ENCODE measurements at regions of chr15 and their contacts with region 1.

Region 1: DNA sequence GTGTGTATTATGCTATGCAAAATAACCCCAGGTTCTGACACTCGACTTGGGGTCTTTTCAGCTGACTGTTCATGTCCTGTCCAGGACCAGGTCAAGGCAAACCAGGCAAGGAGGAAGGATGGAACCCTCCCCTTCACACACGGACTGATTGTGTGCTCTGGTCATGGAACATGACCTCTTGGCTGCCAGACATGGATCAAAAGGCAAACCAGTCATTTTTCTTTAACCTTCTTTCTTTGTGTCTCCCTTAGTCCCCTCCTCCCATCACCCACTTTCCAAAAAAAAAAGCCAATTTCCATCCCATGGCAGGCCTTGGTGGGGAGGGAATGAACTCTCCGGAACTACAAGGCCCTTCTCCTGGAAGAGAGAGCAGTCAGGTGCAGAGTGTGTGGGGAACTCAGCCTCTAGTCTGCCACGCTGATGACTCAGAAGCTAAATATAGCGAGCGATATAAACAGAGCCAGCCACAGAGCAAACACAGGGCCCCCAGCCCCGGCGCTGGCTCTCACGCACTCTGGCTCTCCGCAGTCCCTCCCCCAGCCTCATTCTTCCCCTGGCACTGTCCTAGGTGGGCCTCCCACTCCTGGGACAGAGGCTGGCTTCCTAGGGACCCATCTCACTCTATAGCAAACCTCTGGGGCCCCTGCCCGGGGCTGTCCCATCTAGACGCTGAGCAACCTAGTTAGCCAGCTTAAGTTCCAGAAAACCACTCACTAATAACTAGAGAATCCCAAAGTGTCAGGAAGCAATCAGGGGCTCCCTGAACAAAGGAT is 10.0 kb downstream of the BMF start:
- DNase-seq: peak; percentile 86
- H3K4me3 Mint-ChIP-seq: peak overlapping the region; percentile 54
- H3K27ac Mint-ChIP-seq: peak overlapping the region; percentile 98
- H3K4me1 Mint-ChIP-seq: peaks cover 90% of the 10 kb centered on the region
- H3K27me3 Mint-ChIP-seq: no peaks in the 10 kb centered on the region

Region 2: GRCh38 chr15:40044717-40045571 is 53.7 kb before region 1 on chr15:
- CTCF ChIA-PET with region 1: interaction called, 255 read pairs
- DNase-seq: peak; percentile 89
- H3K4me3 Mint-ChIP-seq: peak overlapping the region; percentile 19
- H3K27ac Mint-ChIP-seq: peak overlapping the region; percentile 74
- H3K4me1 Mint-ChIP-seq: peaks cover 84% of the 10 kb centered on the region
- H3K27me3 Mint-ChIP-seq: no peaks in the 10 kb centered on the region

Region 3: GRCh38 chr15:40054605-40055545 is 43.8 kb before region 1 on chr15:
- CTCF ChIA-PET with region 1: interaction called, 255 read pairs
- DNase-seq: peak; percentile 75
- H3K4me3 Mint-ChIP-seq: peak overlapping the region; percentile 57
- H3K27ac Mint-ChIP-seq: peak overlapping the region; percentile 93
- H3K4me1 Mint-ChIP-seq: peaks cover 82% of the 10 kb centered on the region
- H3K27me3 Mint-ChIP-seq: peaks cover 8% of the 10 kb centered on the region

Region 4: DNA sequence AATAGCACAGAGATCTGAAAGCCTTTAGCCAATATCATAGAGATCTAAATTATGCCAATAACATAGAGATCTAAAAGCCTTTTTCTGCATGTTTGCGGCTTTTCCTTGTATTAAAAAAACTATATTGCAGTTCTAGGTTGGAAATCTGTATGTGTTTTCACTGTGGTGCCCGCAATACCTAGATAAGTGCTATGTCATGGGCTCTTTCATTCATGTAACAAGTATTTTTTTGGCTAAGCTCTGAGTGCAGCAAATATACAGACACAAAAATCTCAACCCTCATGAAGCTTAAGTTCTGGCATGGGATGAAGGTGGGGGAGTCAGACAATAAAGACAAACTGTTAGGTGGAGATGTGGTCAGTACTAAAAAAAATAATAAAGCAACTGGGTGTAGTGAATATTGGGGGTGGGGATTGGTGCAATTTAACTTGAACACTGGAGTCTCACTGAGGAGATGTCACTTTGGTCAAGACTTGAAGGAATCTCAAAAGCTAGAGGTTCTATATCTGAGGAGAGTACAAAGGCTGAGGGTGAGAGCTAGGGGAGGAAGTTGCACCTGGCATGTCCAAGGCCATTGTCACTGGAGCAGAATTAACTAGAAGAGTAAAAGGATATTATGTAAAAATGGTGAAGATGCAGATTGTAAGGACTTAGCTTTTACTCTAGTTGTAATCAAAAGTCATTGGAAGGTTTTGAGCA is 63.2 kb after region 1 on chr15:
- CTCF ChIA-PET with region 1: no interaction called
- DNase-seq: no peak
- H3K4me3 Mint-ChIP-seq: no peak overlapping the region
- H3K27ac Mint-ChIP-seq: no peak overlapping the region
- H3K4me1 Mint-ChIP-seq: peaks cover 14% of the 10 kb centered on the region
- H3K27me3 Mint-ChIP-seq: peaks cover 7% of the 10 kb centered on the region

Region 5: GRCh38 chr15:40280260-40281056 is 181.8 kb after region 1 on chr15:
- CTCF ChIA-PET with region 1: no interaction called
- DNase-seq: no peak
- H3K4me3 Mint-ChIP-seq: no peak overlapping the region
- H3K27ac Mint-ChIP-seq: no peak overlapping the region
- H3K4me1 Mint-ChIP-seq: peaks cover 9% of the 10 kb centered on the region
- H3K27me3 Mint-ChIP-seq: peaks cover 94% of the 10 kb centered on the region

Measured in activated naive CD4-positive, alpha-beta T cell treated with anti-CD3 and anti-CD28 coated beads, Interleukin-2, amount 10 ng/mL, durations not matched to agents 7 days and 5 days (primary cell).